Adrenal gland (tissue), 19 donors: ENCODE measurements at regions of chr11 and their contacts with region 1.

Region 1: GRCh38 chr11:20609727-20610707 is 10.6 kb downstream of the SLC6A5 start:
- DNase-seq: peak; percentile 78 to 90 (median 86)
- H3K4me3 ChIP-seq: no peak overlapping the region
- H3K27ac ChIP-seq: no peak overlapping the region
- H3K4me1 ChIP-seq: peaks cover 0 to 3% of the 10 kb centered on the region in 2 donors
- H3K27me3 ChIP-seq: peaks cover 27% of the 10 kb centered on the region
- CTCF ChIP-seq: peak; percentile 91 to 96 (median 93)
- POLR2A ChIP-seq: no peak

Region 2: DNA sequence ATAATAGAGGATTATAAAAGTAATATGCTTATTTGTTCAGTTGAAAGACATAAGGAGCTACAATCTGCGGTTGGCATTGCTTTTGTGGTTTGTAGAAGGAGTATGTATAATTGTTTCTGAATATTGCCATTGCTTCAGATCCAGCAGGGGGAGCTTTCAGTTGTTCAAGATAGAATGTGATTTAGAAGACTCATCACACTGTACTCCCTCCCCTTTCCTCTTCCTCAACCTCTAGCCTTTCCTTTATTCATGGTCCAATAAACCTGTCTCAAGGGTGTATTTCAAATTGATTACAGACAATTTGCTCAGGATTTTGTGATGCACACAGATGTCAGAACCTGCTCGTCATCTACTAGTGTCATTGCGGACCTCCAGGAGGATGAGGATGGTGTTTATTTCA is 212.7 kb before region 1 on chr11:
- intact Hi-C with region 1: loop called (anchors 5 to 10 kb)
- DNase-seq: peak in 3 of 7 donors; percentile 25 to 42 (median 27)
- H3K4me3 ChIP-seq: no peak overlapping the region
- H3K27ac ChIP-seq: no peak overlapping the region
- H3K4me1 ChIP-seq: no peaks in the 10 kb centered on the region
- H3K27me3 ChIP-seq: no peaks in the 10 kb centered on the region
- CTCF ChIP-seq: peak; percentile 35 to 66 (median 52)
- POLR2A ChIP-seq: no peak

Region 3: DNA sequence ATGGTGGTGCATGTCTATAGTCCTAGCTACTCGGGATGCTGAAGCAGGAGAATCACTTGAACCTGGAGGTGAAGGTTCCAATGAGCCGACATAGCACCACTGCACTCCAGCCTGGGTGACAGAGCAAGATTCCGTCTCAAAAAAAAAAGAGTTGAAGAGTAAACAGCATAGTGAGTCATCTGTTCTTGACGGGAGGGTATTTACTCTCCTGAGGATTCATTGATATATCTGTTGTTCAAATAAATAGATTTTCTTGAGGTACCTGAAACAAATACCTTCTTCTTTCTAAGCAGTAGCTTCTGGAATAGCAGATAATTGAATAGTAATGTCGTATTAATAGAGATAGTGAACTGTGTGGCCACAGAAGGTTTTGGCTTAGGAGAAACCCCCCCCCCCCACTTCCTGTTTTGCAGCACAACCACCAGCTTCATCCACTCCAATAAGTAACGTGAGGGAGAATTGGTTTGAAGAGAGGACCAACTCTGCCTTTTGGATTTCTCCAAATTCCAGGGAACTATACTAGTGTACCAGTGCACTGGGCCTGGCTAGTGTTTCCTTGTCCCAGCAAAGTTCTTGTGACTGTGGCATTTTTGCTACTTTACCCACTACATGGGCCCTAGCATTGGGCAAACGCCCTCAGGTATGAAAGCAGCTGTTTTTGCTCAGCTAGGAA is 132.5 kb before region 1 on chr11:
- intact Hi-C with region 1: no loop called
- DNase-seq: no peak
- H3K4me3 ChIP-seq: no peak overlapping the region
- H3K27ac ChIP-seq: no peak overlapping the region
- H3K4me1 ChIP-seq: peaks cover 0 to 6% of the 10 kb centered on the region in 2 donors
- H3K27me3 ChIP-seq: no peaks in the 10 kb centered on the region
- CTCF ChIP-seq: no peak
- POLR2A ChIP-seq: no peak